Activated CD4-positive, alpha-beta memory T cell treated with anti-CD3 and anti-CD28 coated beads for 36 hours (primary cell): ENCODE measurements at regions of chr4 and their contacts with region 1.

Region 1: GRCh38 chr4:142817442-142817841 is 28.7 kb downstream of the INPP4B start:
- DNase-seq: peak; percentile 70
- H3K4me3 Mint-ChIP-seq: no peak overlapping the region
- H3K27ac Mint-ChIP-seq: peak overlapping the region; percentile 4
- H3K4me1 Mint-ChIP-seq: peaks cover 20% of the 10 kb centered on the region
- H3K27me3 Mint-ChIP-seq: peaks cover 5% of the 10 kb centered on the region

Region 2: DNA sequence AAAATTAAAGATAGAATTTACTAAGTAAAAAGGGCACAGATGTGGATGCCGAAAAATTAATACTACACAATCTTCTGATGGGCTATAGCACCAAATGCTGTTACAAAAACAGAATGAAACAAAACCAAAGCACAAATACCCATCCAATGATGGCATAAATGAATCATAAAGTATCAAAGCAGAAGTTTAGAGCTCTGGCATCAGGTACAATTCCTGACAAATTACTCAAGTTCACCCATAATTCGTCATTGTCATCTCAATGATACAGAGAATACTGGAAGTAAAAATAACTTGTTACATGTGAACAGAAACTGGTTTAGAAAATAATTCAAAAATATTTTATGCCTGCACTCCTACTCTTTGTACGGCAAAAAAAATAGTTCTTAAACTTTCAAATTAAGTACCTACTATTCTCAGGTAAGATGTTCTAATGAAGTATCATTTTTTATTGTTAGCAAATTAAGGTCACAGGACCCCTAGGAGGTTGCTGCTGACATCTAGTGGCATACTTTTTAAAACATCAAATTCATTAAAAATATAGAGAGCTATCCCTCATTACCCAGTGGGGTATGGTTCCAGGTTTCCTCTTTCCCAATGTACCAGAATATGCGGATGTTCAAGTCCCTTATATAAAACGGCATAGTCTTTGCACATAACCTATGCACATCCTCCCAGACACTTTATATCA is 97.4 kb before region 1 on chr4:
- CTCF ChIA-PET with region 1: interaction called, 3 read pairs
- POLR2A ChIA-PET with region 1: no interaction called
- intact Hi-C with region 1: loop called (anchors 5 kb)
- DNase-seq: no peak
- H3K4me3 Mint-ChIP-seq: no peak overlapping the region
- H3K27ac Mint-ChIP-seq: peak overlapping the region; percentile 69
- H3K4me1 Mint-ChIP-seq: peaks cover 28% of the 10 kb centered on the region
- H3K27me3 Mint-ChIP-seq: no peaks in the 10 kb centered on the region

Region 3: GRCh38 chr4:142961866-142962265 is 144.4 kb after region 1 on chr4:
- CTCF ChIA-PET with region 1: no interaction called
- POLR2A ChIA-PET with region 1: no interaction called
- intact Hi-C with region 1: no loop called
- DNase-seq: no peak
- H3K4me3 Mint-ChIP-seq: no peak overlapping the region
- H3K27ac Mint-ChIP-seq: no peak overlapping the region
- H3K4me1 Mint-ChIP-seq: no peaks in the 10 kb centered on the region
- H3K27me3 Mint-ChIP-seq: no peaks in the 10 kb centered on the region

Region 4: GRCh38 chr4:143558823-143559756 is 741.6 kb after region 1 on chr4:
- CTCF ChIA-PET with region 1: no interaction called
- POLR2A ChIA-PET with region 1: no interaction called
- intact Hi-C with region 1: no loop called
- DNase-seq: peak; percentile 79
- H3K4me3 Mint-ChIP-seq: peak overlapping the region; percentile 83
- H3K27ac Mint-ChIP-seq: peak overlapping the region; percentile 78
- H3K4me1 Mint-ChIP-seq: peaks cover 31% of the 10 kb centered on the region
- H3K27me3 Mint-ChIP-seq: no peaks in the 10 kb centered on the region